Right cardiac atrium (tissue), 5 donors: ENCODE measurements at regions of chr14 and their contacts with region 1.

Region 1: DNA sequence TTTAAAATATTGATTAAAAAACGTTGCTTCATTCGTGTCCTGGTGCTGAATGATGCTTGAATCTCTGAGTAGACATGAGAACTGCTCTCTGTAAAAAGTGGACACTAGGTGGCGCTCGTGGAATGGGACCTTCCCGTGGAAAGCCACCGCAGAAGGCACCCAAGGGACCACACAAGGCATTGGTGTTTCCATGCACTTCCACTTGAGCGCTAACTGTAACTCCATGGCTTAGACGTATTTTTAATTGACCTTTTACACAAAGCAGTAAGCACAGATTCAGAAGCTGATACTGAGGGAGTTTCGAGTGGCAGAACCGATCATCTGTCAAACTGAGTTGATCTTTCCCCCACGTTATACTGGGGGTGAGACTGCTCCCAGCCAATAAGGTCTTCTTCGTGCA is 135.3 kb downstream of the PRKCH start:
- DNase-seq: peak; percentile 85 to 89 (median 86)
- ATAC-seq: peak; percentile 74 to 76
- H3K4me3 ChIP-seq: no peak overlapping the region
- H3K27ac ChIP-seq: no peak overlapping the region
- H3K4me1 ChIP-seq: no peaks in the 10 kb centered on the region
- H3K27me3 ChIP-seq: no peaks in the 10 kb centered on the region

Region 2: GRCh38 chr14:61296719-61297502 is 159.8 kb before region 1 on chr14:
- intact Hi-C with region 1: loop called in 3 of 4 experiments (anchors 10 kb)
- DNase-seq: no peak
- ATAC-seq: no peak
- H3K4me3 ChIP-seq: no peak overlapping the region
- H3K27ac ChIP-seq: no peak overlapping the region
- H3K4me1 ChIP-seq: no peaks in the 10 kb centered on the region
- H3K27me3 ChIP-seq: no peaks in the 10 kb centered on the region

Region 3: DNA sequence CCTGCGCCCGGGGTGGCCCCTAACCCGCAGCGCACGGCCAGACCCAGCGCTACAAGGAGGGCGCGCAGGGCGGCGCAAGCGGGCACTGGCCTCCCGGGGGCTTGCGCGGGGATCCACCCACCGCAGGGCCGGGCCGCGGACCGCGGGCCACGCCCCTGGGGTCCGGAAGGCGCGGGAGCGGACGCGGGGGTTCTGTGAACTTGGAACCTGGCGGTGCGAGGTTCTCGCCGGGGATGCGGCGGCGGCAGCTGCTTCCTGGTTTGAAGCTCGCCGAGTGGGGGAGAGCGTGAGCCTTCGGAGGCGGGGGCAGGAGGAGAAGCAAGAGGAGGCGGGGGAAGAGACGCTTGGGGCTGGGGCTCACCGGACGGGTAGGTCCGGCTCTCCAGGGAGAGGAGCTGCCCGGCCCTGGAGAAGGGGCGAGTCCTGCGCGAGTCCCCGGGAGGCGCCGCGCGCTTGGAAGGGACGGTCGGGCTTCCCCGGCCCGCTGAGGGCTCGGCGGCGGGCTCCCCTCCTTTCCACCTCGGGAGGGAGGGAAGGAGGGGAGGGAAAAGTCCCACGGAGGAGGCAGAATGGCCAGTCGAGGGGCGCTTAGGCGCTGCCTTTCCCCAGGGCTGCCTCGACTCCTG is 135.2 kb before region 1 on chr14 and contains the start of gene PRKCH:
- intact Hi-C with region 1: loop called in 2 of 4 experiments (anchors 10 kb)
- DNase-seq: peak; percentile 81 to 91 (median 90)
- ATAC-seq: peak; percentile 85 to 91
- H3K4me3 ChIP-seq: peak within 1 kb of the TSS; percentile 66
- H3K27ac ChIP-seq: peak within 1 kb of the TSS; percentile 31
- H3K4me1 ChIP-seq: no peaks in the 10 kb centered on the region
- H3K27me3 ChIP-seq: no peaks in the 10 kb centered on the region
- total RNA-seq, gene PRKCH: 25.8 to 31.3 (median 28.2) TPM

Region 4: DNA sequence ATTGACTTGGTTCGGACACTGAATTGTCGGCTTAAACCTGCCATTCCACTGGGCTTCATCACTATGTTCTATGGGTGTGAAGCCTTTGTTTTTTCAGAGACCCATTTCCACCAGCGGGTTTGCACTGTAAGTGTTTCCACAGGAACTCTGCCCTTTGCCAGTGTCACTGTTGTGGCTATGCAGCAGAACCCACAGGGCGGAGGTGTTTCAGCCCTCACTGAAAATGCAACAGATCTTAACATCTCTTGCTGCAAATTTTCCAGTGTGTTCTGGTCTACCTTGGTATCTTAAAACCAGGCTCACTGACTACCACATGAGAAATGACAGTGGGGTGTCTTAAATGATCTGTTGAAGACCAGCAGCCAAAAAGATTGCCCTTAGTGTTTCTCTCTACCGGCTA is 114.2 kb before region 1 on chr14:
- intact Hi-C with region 1: no loop called
- DNase-seq: no peak
- ATAC-seq: peak; percentile 44 to 73
- H3K4me3 ChIP-seq: no peak overlapping the region
- H3K27ac ChIP-seq: no peak overlapping the region
- H3K4me1 ChIP-seq: peaks cover 14% of the 10 kb centered on the region
- H3K27me3 ChIP-seq: no peaks in the 10 kb centered on the region

Region 5: GRCh38 chr14:62126879-62127478 is 670.3 kb after region 1 on chr14:
- intact Hi-C with region 1: loop called in 2 of 4 experiments (anchors 10 kb)
- DNase-seq: no peak
- ATAC-seq: peak; percentile 51 to 64
- H3K4me3 ChIP-seq: no peak overlapping the region
- H3K27ac ChIP-seq: no peak overlapping the region
- H3K4me1 ChIP-seq: no peaks in the 10 kb centered on the region
- H3K27me3 ChIP-seq: peaks cover 2% of the 10 kb centered on the region